ENCODE measurements at regions of chr18 and their contacts with region 1.

Region 1: GRCh38 chr18:64037812-64038414 is 68.0 kb downstream of the SERPINB8 start:
- DNase-seq: peak; percentile 56
- ATAC-seq: peak; percentile 43
- H3K4me3 ChIP-seq: no peak overlapping the region
- H3K4me3 Mint-ChIP-seq: no peak overlapping the region
- H3K27ac ChIP-seq: no peak overlapping the region
- H3K27ac Mint-ChIP-seq: no peak overlapping the region
- H3K4me1 ChIP-seq: no peaks in the 10 kb centered on the region
- H3K4me1 Mint-ChIP-seq: no peaks in the 10 kb centered on the region
- H3K27me3 ChIP-seq: peaks cover 0 to 3% (median 0%) of the 10 kb centered on the region in 4 experiments
- H3K27me3 Mint-ChIP-seq: no peaks in the 10 kb centered on the region
- CTCF ChIP-seq: peak; percentile 78

Region 2: GRCh38 chr18:64409511-64409910 is 371.6 kb after region 1 on chr18:
- CTCF ChIA-PET with region 1: interaction called, 8 read pairs
- POLR2A ChIA-PET with region 1: no interaction called
- intact Hi-C with region 1: loop called (anchors 5 kb)
- DNase-seq: peak; percentile 50
- ATAC-seq: no peak
- H3K4me3 ChIP-seq: no peak overlapping the region
- H3K4me3 Mint-ChIP-seq: no peak overlapping the region
- H3K27ac ChIP-seq: no peak overlapping the region
- H3K27ac Mint-ChIP-seq: no peak overlapping the region
- H3K4me1 ChIP-seq: peaks cover 0 to 1% of the 10 kb centered on the region in 2 donors
- H3K4me1 Mint-ChIP-seq: peaks cover 1% of the 10 kb centered on the region
- H3K27me3 ChIP-seq: no peaks in the 10 kb centered on the region
- H3K27me3 Mint-ChIP-seq: no peaks in the 10 kb centered on the region
- CTCF ChIP-seq: peak; percentile 65

Region 3: DNA sequence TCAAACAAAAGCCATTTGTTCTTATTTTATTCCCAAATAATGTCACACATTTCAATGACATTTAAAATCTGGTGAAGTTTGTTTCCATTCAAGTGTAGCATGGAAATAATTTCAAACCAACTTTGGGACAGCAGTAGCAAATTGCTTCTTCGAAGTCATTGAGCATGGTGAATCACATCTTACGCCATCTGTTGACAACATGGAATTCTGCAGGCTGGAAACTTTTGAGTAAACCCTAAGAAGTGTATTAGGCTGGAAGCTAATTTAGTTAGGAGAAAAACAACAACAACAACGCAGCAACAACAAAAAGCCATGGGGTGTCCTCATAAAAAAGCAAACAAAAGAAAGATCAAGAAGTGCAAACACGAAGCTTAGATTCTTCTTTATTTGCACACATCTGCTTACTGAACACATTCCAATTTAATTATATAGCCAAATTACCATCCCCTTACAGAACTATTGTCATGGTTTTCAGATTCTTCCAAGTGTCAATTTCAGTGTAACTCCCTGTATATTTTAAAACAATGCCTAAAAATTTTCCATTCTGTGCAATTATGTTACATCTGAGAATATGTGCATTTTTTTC is 1053.9 kb after region 1 on chr18:
- CTCF ChIA-PET with region 1: no interaction called
- POLR2A ChIA-PET with region 1: no interaction called
- intact Hi-C with region 1: loop called (anchors 5 kb)
- DNase-seq: peak; percentile 14
- ATAC-seq: no peak
- H3K4me3 ChIP-seq: no peak overlapping the region
- H3K4me3 Mint-ChIP-seq: no peak overlapping the region
- H3K27ac ChIP-seq: no peak overlapping the region
- H3K27ac Mint-ChIP-seq: no peak overlapping the region
- H3K4me1 ChIP-seq: no peaks in the 10 kb centered on the region
- H3K4me1 Mint-ChIP-seq: no peaks in the 10 kb centered on the region
- H3K27me3 ChIP-seq: no peaks in the 10 kb centered on the region
- H3K27me3 Mint-ChIP-seq: no peaks in the 10 kb centered on the region
- CTCF ChIP-seq: peak; percentile 21

Measured in B cell (primary cell).